Aorta (tissue), 5 donors: ENCODE measurements at regions of chr11 and their contacts with region 1.

Region 1: DNA sequence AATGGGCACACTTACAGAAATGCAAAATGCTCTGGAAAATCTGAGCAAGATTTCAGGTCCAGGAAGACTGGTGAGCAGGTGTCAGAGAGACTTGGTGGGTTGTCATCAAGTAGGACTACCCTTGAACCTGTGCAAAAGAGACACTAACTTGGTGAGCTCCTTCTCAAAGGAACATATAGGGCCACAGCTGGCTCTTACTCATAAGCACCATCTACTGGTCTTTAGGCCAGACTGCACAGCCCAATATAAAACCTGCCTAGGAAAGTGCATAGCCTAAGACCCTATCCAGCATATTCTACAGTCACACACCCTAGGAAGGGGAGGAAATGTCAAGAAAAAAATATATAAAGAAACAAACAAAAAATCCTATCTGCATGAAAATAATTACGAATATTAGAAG is 18.2 kb upstream of the OR10W1 start:
- DNase-seq: no peak
- ATAC-seq: no peak
- H3K4me3 ChIP-seq: no peak overlapping the region
- H3K27ac ChIP-seq: no peak overlapping the region
- H3K4me1 ChIP-seq: no peaks in the 10 kb centered on the region
- H3K27me3 ChIP-seq: no peaks in the 10 kb centered on the region

Region 2: GRCh38 chr11:57552479-57552878 is 733.8 kb before region 1 on chr11:
- intact Hi-C with region 1: loop called in 1 of 2 experiments (anchors 10 kb)
- DNase-seq: no peak
- ATAC-seq: no peak
- H3K4me3 ChIP-seq: no peak overlapping the region
- H3K27ac ChIP-seq: no peak overlapping the region
- H3K4me1 ChIP-seq: no peaks in the 10 kb centered on the region
- H3K27me3 ChIP-seq: no peaks in the 10 kb centered on the region